Sigmoid colon (tissue), 7 donors: ENCODE measurements at regions of chr6 and their contacts with region 1.

Region 1: GRCh38 chr6:7238900-7239589 is 74.0 kb downstream of the SSR1 start:
- DNase-seq: peak; percentile 91
- H3K4me3 ChIP-seq: no peak overlapping the region
- H3K27ac ChIP-seq: peak overlapping the region in 2 of 4 donors; percentile 18 to 24
- H3K4me1 ChIP-seq: peaks cover 0 to 26% (median 6%) of the 10 kb centered on the region in 4 donors
- H3K27me3 ChIP-seq: no peaks in the 10 kb centered on the region
- CTCF ChIP-seq: peak; percentile 32 to 66 (median 57)
- EP300 ChIP-seq: no peak
- POLR2A ChIP-seq: no peak

Region 2: GRCh38 chr6:6676910-6677441 is 562.1 kb before region 1 on chr6:
- intact Hi-C with region 1: loop called (anchors 1 kb)
- DNase-seq: peak; percentile 85
- H3K4me3 ChIP-seq: no peak overlapping the region
- H3K27ac ChIP-seq: peak overlapping the region in 1 of 4 donors; percentile 15
- H3K4me1 ChIP-seq: peaks cover 0 to 5% (median 2%) of the 10 kb centered on the region in 4 donors
- H3K27me3 ChIP-seq: no peaks in the 10 kb centered on the region
- CTCF ChIP-seq: peak; percentile 83 to 94 (median 93)
- EP300 ChIP-seq: no peak
- POLR2A ChIP-seq: no peak

Region 3: GRCh38 chr6:6724539-6725467 is 514.2 kb before region 1 on chr6:
- intact Hi-C with region 1: loop called (anchors 1 kb)
- DNase-seq: peak; percentile 82
- H3K4me3 ChIP-seq: peak overlapping the region; percentile 16 to 53 (median 45)
- H3K27ac ChIP-seq: peak overlapping the region; percentile 70 to 77 (median 76)
- H3K4me1 ChIP-seq: peaks cover 0 to 18% (median 16%) of the 10 kb centered on the region in 4 donors
- H3K27me3 ChIP-seq: no peaks in the 10 kb centered on the region
- CTCF ChIP-seq: peak; percentile 51 to 75 (median 64)
- EP300 ChIP-seq: no peak
- POLR2A ChIP-seq: no peak

Region 4: DNA sequence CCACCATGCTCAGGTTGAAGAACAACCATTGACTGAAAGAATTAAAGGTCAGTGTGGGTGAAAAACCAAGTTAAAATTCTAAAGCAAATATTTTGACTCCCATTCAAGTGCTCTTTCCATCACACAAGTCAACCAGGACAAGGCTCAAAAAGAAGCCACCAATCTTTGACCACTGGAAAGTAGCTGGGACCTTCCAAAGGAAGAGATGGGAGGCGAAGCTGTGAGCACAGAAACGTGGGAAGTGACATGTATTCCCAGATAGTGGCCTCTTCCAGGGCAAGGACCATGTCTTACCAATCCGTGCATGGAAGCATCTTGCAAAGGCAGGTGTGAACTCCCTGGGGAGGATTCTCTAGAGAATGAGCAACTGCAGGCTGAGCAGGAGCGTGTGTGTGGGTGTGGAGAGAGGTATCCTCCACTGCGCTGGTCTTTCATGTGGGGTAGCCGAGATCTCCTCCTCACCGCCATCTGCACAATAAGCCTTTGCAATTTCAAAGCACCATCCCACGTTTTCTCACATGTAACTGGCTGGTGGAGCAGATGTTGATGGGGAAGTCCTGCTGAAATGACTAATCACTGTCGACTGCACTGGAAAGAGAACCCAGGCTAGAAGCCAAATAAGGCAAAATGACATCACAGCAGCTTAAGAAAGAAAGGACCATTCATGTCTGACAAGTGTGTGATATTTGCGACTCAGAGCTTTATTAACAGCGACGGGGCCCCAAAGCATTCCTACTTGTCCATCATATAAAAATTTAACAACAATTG is 320.6 kb before region 1 on chr6:
- intact Hi-C with region 1: loop called (anchors 10 kb)
- DNase-seq: no peak
- H3K4me3 ChIP-seq: no peak overlapping the region
- H3K27ac ChIP-seq: no peak overlapping the region
- H3K4me1 ChIP-seq: peaks cover 0 to 21% (median 15%) of the 10 kb centered on the region in 4 donors
- H3K27me3 ChIP-seq: no peaks in the 10 kb centered on the region
- CTCF ChIP-seq: no peak
- EP300 ChIP-seq: no peak
- POLR2A ChIP-seq: no peak

Region 5: GRCh38 chr6:7051233-7052114 is 187.6 kb before region 1 on chr6:
- intact Hi-C with region 1: loop called (anchors 5 kb)
- DNase-seq: peak; percentile 77
- H3K4me3 ChIP-seq: peak overlapping the region; percentile 46 to 79 (median 58)
- H3K27ac ChIP-seq: peak overlapping the region; percentile 65 to 82 (median 76)
- H3K4me1 ChIP-seq: peaks cover 0 to 20% (median 12%) of the 10 kb centered on the region in 4 donors
- H3K27me3 ChIP-seq: no peaks in the 10 kb centered on the region
- CTCF ChIP-seq: no peak
- EP300 ChIP-seq: no peak
- POLR2A ChIP-seq: no peak